Heart right ventricle (tissue), 16 donors: ENCODE measurements at regions of chr20 and their contacts with region 1.

Region 1: GRCh38 chr20:20083807-20084206 is 31.5 kb downstream of the CFAP61 start:
- DNase-seq: no peak
- ATAC-seq: peak in 6 of 8 donors; percentile 11 to 46 (median 32)
- H3K4me3 ChIP-seq: peak overlapping the region in 2 of 10 donors; percentile 2 to 16
- H3K27ac ChIP-seq: peak overlapping the region in 9 of 10 donors; percentile 64 to 87 (median 84)
- H3K4me1 ChIP-seq: peaks cover 0 to 28% (median 4%) of the 10 kb centered on the region in 9 donors
- H3K27me3 ChIP-seq: peaks cover 0 to 17% (median 5%) of the 10 kb centered on the region in 7 donors
- CTCF ChIP-seq: peak; percentile 18 to 68 (median 55)

Region 2: DNA sequence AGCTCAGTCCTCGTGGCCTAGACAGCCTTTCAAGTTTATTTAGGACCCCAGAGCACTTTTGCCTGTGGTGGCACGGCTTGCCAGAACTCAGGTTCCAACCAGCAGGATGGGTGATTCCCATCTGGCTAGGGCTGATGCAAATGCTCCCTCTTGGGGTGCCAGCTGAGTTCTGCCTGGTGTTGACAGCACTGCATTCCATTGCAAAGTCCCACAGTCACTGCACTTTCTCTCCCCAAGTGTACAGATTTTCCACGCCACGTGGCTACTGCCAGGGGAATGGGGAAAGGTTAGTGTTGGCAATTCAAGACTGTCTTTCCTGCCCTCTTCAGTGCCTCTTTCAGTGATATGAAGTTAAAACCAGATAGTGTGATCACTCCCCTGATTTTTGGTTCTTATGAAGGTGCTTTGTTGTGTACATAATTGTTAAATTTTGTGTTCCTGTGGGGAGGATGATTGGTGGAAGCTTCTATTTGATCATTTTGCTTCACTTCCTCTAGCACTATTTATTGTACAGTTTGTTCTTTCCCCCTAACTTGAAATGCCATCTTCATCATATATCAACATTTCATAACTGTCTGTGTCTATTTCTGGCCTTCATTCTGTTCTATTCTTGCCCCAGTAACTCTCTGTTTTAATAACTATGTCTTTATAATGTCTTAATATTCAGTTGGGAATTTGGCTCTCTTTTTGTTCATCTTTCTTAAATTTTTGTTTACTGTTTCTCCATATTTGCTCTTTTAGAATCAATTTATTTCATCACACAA is 54.7 kb after region 1 on chr20:
- intact Hi-C with region 1: loop called in 3 of 10 experiments (anchors 1 to 5 kb)
- DNase-seq: peak; percentile 27 to 38
- ATAC-seq: peak; percentile 65 to 95 (median 92)
- H3K4me3 ChIP-seq: no peak overlapping the region
- H3K27ac ChIP-seq: peak overlapping the region in 9 of 10 donors; percentile 39 to 74 (median 67)
- H3K4me1 ChIP-seq: peaks cover 0 to 30% (median 6%) of the 10 kb centered on the region in 9 donors
- H3K27me3 ChIP-seq: no peaks in the 10 kb centered on the region
- CTCF ChIP-seq: peak in 2 of 9 donors; percentile 9 to 11

Region 3: DNA sequence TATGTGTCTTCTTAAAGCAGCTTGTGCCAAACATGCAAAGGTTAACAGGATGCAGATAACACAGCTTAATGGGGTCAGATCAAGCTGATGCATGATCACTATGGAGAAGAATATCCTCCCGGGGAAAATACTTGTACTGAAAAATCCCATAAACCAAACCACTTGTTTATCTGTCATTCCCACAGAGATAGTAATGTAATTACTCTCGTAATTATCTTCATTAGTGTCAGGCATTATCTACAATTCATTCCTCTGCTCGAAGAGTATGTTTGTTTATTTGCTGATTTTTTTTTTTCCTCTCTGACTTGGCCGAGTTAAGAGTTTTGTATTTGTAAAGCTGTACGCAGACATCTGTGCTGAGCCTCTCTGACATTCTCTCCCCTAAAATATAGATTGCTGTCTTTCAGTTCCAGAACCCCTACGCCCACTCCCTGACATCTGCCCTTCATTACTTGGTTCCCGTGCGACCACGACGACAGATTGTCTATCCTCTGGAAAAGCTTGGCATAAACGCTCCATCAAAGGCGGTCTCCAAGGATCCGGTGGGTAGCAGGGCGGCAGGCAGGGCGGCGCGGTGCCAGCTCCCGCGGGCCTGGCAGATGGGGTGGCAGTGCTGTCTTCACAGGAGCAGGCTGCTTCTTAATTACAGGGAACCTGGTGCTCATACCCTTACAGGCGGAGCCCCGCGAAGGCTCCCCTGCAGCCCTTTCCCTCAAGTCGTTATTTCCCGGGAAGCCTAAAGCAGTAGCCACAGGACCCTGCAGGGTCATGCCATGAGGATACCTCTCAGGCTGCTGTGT is 115.8 kb after region 1 on chr20:
- intact Hi-C with region 1: loop called in 1 of 10 experiments (anchors 5 kb)
- DNase-seq: no peak
- ATAC-seq: no peak
- H3K4me3 ChIP-seq: no peak overlapping the region
- H3K27ac ChIP-seq: no peak overlapping the region
- H3K4me1 ChIP-seq: peaks cover 0 to 39% (median 22%) of the 10 kb centered on the region in 9 donors
- H3K27me3 ChIP-seq: peaks cover 0 to 8% (median 0%) of the 10 kb centered on the region in 7 donors
- CTCF ChIP-seq: no peak

Region 4: DNA sequence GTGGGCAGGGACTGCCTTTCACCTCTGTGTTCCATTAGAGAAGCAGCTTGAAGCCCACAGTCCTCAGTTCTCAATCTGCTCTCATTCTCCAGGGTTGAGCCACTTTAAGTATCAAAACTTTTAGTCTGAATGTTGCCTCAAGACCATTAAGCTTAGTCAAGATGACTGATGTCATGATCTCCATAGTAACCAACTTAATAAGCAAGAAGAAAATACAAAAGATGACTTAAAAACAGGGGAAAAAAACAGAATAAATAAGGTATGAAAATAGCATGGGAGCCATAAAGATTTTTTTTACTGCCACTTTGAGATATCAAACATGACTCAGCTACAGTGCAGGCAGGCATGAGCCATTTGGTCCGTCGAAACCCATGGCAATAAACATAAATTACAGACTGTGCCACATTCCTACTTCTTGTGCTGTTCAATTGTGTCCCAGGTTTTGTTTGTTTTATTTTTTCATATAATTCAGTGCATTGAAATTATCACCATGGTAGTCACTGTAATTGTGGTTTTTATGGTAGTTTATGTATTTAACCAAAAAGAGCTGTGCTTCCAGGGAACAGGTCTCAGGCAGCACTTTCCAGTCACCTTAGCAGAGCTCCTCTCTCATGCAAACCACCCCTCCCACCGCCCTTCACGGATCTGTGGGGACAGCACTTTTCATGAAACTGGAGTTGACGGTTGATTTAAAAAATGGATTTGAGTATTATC is 127.6 kb after region 1 on chr20:
- intact Hi-C with region 1: loop called in 3 of 10 experiments (anchors 1 to 5 kb)
- DNase-seq: no peak
- ATAC-seq: no peak
- H3K4me3 ChIP-seq: no peak overlapping the region
- H3K27ac ChIP-seq: peak overlapping the region in 7 of 10 donors; percentile 36 to 74 (median 57)
- H3K4me1 ChIP-seq: peaks cover 0 to 47% (median 16%) of the 10 kb centered on the region in 9 donors
- H3K27me3 ChIP-seq: peaks cover 0 to 11% (median 0%) of the 10 kb centered on the region in 7 donors
- CTCF ChIP-seq: no peak

Region 5: DNA sequence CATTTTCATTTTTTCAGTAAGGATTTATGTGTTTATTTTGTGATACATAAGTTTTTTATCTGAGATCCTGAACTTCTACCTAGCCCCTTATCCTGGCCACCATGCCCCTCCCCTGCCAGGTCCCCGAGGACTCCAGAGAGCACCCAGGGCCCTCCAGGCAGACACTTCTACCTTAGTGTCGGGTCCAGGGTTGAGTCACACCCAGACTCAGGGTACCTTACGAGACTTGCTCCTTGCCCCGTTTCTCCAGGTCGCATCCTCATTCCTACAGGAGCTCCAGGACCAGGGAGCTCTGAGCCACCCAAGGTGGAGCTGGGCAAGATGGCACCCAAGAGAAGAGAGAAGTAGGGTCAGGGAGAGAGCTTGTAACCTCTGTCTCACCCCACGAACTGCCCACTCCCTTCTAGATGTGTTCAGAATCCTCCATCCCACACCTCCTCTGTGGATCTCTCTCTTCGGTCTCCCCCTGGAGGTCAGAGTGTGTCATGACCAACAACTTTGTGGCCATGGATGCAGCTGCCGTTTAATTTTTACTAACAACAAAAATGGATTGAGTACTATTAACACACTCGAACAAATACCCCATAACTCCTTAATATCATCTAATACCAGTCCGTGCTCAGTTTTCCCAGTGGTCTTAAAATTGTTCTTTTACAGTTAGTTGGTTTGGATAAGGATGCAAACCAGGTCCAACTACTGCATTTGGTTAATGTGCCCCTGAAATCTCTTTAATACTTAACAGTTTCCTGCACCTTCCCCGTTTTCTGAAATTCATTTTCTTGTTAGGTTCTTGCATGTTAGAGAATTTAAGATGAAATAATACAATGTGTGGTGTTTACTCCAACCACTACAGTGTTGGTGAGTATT is 153.5 kb after region 1 on chr20:
- intact Hi-C with region 1: loop called in 9 of 10 experiments (anchors 1 to 5 kb)
- DNase-seq: peak in 1 of 2 donors; percentile 37
- ATAC-seq: peak in 7 of 8 donors; percentile 55 to 76 (median 69)
- H3K4me3 ChIP-seq: no peak overlapping the region
- H3K27ac ChIP-seq: no peak overlapping the region
- H3K4me1 ChIP-seq: peaks cover 0 to 10% (median 0%) of the 10 kb centered on the region in 9 donors
- H3K27me3 ChIP-seq: peaks cover 0 to 9% (median 0%) of the 10 kb centered on the region in 7 donors
- CTCF ChIP-seq: peak; percentile 52 to 82 (median 71)

Region 6: GRCh38 chr20:20568604-20569205 is 484.9 kb after region 1 on chr20:
- intact Hi-C with region 1: loop called (anchors 2 to 10 kb)
- DNase-seq: no peak
- ATAC-seq: peak in 1 of 8 donors; percentile 42
- H3K4me3 ChIP-seq: no peak overlapping the region
- H3K27ac ChIP-seq: no peak overlapping the region
- H3K4me1 ChIP-seq: peaks cover 0 to 3% (median 0%) of the 10 kb centered on the region in 9 donors
- H3K27me3 ChIP-seq: no peaks in the 10 kb centered on the region
- CTCF ChIP-seq: peak; percentile 22 to 72 (median 65)

Region 7: DNA sequence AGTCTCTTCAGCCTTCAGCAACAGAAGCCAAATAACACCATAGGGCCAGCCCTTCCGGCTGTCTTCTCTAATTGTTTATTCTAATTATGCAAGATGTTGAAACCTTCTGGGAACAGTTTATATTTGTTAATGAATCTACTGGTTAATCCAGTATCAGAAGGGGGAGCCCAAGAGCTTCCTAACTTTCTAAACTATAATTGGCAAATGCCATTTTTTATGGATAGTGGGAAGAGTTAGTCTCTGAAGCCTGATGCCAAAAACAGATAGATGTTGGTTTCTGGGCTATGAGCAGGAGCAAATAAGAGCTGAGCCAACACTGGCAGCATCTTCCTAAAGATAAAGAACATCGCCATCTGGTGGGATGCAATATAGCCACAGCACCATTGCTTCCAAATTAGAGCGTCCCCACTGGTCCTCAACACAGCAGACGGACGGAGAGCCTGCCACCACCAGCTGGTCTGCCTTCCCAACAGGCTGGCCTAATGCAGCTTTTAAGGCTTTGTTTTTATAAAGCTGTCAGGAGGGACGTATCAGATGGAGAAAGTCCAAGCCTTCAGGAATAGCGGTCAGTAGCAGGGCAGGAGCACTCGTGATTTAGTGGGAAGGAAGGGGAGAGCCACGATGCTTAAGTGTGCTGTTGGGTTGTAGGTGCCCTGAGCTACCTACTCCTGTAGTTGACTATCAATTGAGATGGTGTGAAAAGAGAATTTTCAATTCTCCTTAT is 509.8 kb after region 1 on chr20:
- intact Hi-C with region 1: loop called in 2 of 10 experiments (anchors 5 to 10 kb)
- DNase-seq: no peak
- ATAC-seq: peak in 6 of 8 donors; percentile 31 to 56 (median 42)
- H3K4me3 ChIP-seq: no peak overlapping the region
- H3K27ac ChIP-seq: no peak overlapping the region
- H3K4me1 ChIP-seq: peaks cover 0 to 12% (median 0%) of the 10 kb centered on the region in 9 donors
- H3K27me3 ChIP-seq: no peaks in the 10 kb centered on the region
- CTCF ChIP-seq: peak in 8 of 9 donors; percentile 12 to 52 (median 46)